H1 (cell line): ENCODE measurements at regions of chr12 and their contacts with region 1.

Region 1: GRCh38 chr12:57904848-57905811 is 36.2 kb upstream of the ATP23 start:
- DNase-seq: peak; percentile 64 to 95
- H3K4me3 ChIP-seq: no peak overlapping the region
- H3K27ac ChIP-seq: no peak overlapping the region
- H3K4me1 ChIP-seq: no peaks in the 10 kb centered on the region
- H3K27me3 ChIP-seq: peaks cover 0 to 4% (median 0%) of the 10 kb centered on the region in 4 experiments; a peak in 4 of 7 replicates
- CTCF ChIP-seq: peak; percentile 99 to 100 (median 100)
- EP300 ChIP-seq: no peak
- POLR2A ChIP-seq: no peak
- RAD21 ChIP-seq: peak; percentile 99

Region 2: GRCh38 chr12:57803319-57803893 is 101.7 kb before region 1 on chr12:
- CTCF ChIA-PET with region 1: interaction called, 44 read pairs
- POLR2A ChIA-PET with region 1: interaction called, 4 read pairs
- DNase-seq: peak; percentile 31 to 76
- H3K4me3 ChIP-seq: no peak overlapping the region
- H3K27ac ChIP-seq: no peak overlapping the region
- H3K4me1 ChIP-seq: peaks cover 0 to 2% (median under 1%) of the 10 kb centered on the region in 4 experiments; a peak in 1 of 7 replicates
- H3K27me3 ChIP-seq: no peaks in the 10 kb centered on the region
- CTCF ChIP-seq: peak; percentile 73 to 92 (median 78)
- EP300 ChIP-seq: no peak
- POLR2A ChIP-seq: no peak
- RAD21 ChIP-seq: peak; percentile 64 to 72

Region 3: GRCh38 chr12:57822392-57823130 is 82.6 kb before region 1 on chr12:
- CTCF ChIA-PET with region 1: interaction called, 105 read pairs
- POLR2A ChIA-PET with region 1: interaction called, 3 read pairs
- DNase-seq: no peak
- H3K4me3 ChIP-seq: no peak overlapping the region
- H3K27ac ChIP-seq: no peak overlapping the region
- H3K4me1 ChIP-seq: no peaks in the 10 kb centered on the region
- H3K27me3 ChIP-seq: no peaks in the 10 kb centered on the region
- CTCF ChIP-seq: no peak
- EP300 ChIP-seq: no peak
- POLR2A ChIP-seq: no peak
- RAD21 ChIP-seq: no peak

Region 4: GRCh38 chr12:57852620-57853500 is 52.3 kb before region 1 on chr12:
- CTCF ChIA-PET with region 1: interaction called, 49 read pairs
- POLR2A ChIA-PET with region 1: interaction called, 181 read pairs
- DNase-seq: peak; percentile 80 to 85
- H3K4me3 ChIP-seq: peak overlapping the region; percentile 23 to 57 (median 44); a peak in 7 of 8 replicates
- H3K27ac ChIP-seq: peak overlapping the region; percentile 33; the same call in 1 of the 2 replicates
- H3K4me1 ChIP-seq: peaks cover 15 to 28% (median 22%) of the 10 kb centered on the region in 4 experiments
- H3K27me3 ChIP-seq: peaks cover 0 to 3% (median 1%) of the 10 kb centered on the region in 4 experiments; a peak in 2 of 7 replicates
- CTCF ChIP-seq: peak; percentile 17 to 24 (median 23)
- EP300 ChIP-seq: peak in 1 of 2 experiments; percentile 8; a peak in 1 of 3 replicates
- POLR2A ChIP-seq: peak in 1 of 2 experiments; percentile 66; a peak in 2 of 3 replicates
- RAD21 ChIP-seq: peak; percentile 27 to 44

Region 5: GRCh38 chr12:57874166-57875108 is 30.7 kb before region 1 on chr12:
- CTCF ChIA-PET with region 1: interaction called, 11 read pairs
- POLR2A ChIA-PET with region 1: no interaction called
- DNase-seq: no peak
- H3K4me3 ChIP-seq: no peak overlapping the region
- H3K27ac ChIP-seq: no peak overlapping the region
- H3K4me1 ChIP-seq: no peaks in the 10 kb centered on the region; a peak in 1 of 7 replicates
- H3K27me3 ChIP-seq: no peaks in the 10 kb centered on the region
- CTCF ChIP-seq: no peak
- EP300 ChIP-seq: no peak
- POLR2A ChIP-seq: no peak
- RAD21 ChIP-seq: no peak

Region 6: DNA sequence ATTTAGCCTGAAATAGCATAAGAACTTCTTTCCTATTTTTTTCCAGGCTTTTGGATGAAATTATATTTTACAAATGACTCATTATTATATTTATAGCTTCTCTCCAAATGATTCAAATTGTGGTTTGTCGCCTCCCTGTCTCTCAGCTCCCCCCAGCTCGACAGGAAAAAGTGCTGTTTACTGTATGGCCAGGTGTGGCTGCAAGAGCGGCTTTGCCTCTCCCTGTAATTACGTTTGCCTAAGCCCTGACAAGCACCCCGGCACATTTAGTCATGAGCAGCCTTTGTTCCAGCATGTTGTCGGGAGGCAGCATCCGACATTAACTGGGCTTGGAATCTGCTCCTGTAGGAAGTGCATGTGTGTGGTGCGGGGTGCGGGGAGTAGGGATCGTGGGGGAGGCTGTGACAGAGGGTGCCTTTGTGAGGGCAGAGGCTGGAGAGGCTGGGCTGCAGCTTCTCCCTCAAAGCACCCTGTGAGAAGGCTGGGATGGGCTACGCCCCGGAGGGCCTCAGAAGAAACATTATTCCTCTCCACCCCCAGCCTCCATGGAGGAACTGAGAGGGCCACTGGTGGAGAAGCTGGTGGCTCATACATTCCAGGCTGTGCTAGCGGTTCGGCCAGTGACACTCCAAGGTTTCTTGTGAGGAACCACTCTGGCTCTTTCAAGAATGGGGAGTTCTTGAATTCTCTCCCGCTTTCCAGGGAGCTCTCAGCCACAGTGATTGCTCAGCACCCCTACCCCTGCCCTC is 16.5 kb before region 1 on chr12:
- CTCF ChIA-PET with region 1: interaction called, 75 read pairs
- POLR2A ChIA-PET with region 1: interaction called, 3 read pairs
- DNase-seq: no peak
- H3K4me3 ChIP-seq: peak overlapping the region in 3 of 4 experiments; percentile 4 to 23 (median 19); a peak in 3 of 8 replicates
- H3K27ac ChIP-seq: peak overlapping the region; percentile 4; the same call in 1 of the 2 replicates
- H3K4me1 ChIP-seq: peaks cover 2 to 22% (median 17%) of the 10 kb centered on the region in 4 experiments
- H3K27me3 ChIP-seq: no peaks in the 10 kb centered on the region; a peak in 1 of 7 replicates
- CTCF ChIP-seq: no peak
- EP300 ChIP-seq: no peak
- POLR2A ChIP-seq: peak in 1 of 2 experiments; percentile 59; a peak in 2 of 3 replicates
- RAD21 ChIP-seq: no peak

Region 7: DNA sequence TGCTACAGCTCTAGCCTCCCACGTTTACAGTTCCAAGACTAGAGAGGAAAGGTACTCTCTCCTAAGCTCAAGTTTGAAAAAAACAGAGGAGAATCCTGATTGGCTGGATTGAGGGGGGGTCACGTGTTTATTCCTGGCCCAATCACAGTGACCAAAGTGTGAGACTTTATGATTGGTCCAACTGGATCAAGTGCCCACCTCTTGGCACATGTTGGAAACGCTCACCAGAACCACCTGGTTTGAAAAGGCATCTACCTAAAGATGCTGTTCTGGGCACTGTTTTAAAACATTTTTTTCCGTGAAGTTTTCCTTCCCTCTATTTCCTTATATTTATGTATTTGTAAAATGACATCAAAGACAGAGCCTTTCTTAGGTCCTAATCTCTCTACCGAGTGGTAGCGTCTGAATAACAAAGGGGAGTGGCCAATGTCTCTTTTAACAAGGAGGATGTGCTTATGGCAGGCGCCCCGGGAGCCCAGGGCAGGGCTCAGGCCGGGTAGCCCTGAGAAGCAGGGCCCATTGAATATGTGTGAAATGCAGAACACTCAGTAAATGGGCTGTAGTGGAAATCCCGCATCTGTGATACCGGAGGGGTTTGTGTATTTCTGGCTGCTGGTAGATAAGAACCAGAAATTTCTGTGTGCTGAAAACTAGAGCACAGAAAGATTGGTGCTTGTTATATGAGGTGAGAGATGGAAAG is 182.4 kb after region 1 on chr12:
- CTCF ChIA-PET with region 1: no interaction called
- POLR2A ChIA-PET with region 1: no interaction called
- DNase-seq: no peak
- H3K4me3 ChIP-seq: no peak overlapping the region
- H3K27ac ChIP-seq: no peak overlapping the region
- H3K4me1 ChIP-seq: 0 out of 7 replicates have a peak, but pooled peaks cover 0 to 4% (median 0%) of the 10 kb centered on the region in 4 experiments
- H3K27me3 ChIP-seq: no peaks in the 10 kb centered on the region
- CTCF ChIP-seq: no peak
- EP300 ChIP-seq: no peak
- POLR2A ChIP-seq: no peak
- RAD21 ChIP-seq: no peak